GM10248 (cell line): ENCODE measurements at regions of chr2 and their contacts with region 1.

Region 1: GRCh38 chr2:69816923-69817542 is 12.4 kb upstream of the GMCL1 start:
- DNase-seq: peak; percentile 59
- CTCF ChIP-seq: peak; percentile 74

Region 2: DNA sequence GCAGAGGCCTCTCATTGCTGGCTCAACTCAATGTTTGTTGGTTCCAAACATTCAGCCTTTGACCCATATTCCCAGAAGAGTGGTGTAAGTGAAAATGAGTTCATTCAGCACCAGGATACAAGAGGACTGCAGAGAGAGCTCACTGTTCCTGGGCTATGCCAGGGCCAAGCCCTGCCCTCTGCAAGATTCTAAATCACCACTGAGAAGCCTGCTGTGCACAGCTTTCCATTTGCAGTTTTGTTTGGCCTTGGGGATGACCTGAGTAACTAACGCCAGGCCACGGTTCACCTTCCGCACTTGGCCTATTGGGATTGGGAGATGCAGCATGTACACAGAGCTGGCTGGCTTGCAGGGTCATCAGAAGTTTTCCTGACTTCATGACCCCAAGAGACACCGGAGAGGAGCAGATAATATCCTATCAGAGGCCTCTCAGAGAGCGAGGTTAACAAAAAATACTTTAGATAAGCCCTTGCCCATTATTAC is 830.0 kb before region 1 on chr2:
- CTCF ChIA-PET with region 1: no interaction called
- POLR2A ChIA-PET with region 1: no interaction called
- DNase-seq: no peak
- CTCF ChIP-seq: no peak

Region 3: GRCh38 chr2:69634196-69634821 is 182.7 kb before region 1 on chr2:
- CTCF ChIA-PET with region 1: no interaction called
- POLR2A ChIA-PET with region 1: no interaction called
- DNase-seq: no peak
- CTCF ChIP-seq: no peak

Region 4: GRCh38 chr2:69734035-69734631 is 82.9 kb before region 1 on chr2:
- CTCF ChIA-PET with region 1: interaction called, 35 read pairs
- POLR2A ChIA-PET with region 1: no interaction called
- DNase-seq: no peak
- CTCF ChIP-seq: no peak

Region 5: DNA sequence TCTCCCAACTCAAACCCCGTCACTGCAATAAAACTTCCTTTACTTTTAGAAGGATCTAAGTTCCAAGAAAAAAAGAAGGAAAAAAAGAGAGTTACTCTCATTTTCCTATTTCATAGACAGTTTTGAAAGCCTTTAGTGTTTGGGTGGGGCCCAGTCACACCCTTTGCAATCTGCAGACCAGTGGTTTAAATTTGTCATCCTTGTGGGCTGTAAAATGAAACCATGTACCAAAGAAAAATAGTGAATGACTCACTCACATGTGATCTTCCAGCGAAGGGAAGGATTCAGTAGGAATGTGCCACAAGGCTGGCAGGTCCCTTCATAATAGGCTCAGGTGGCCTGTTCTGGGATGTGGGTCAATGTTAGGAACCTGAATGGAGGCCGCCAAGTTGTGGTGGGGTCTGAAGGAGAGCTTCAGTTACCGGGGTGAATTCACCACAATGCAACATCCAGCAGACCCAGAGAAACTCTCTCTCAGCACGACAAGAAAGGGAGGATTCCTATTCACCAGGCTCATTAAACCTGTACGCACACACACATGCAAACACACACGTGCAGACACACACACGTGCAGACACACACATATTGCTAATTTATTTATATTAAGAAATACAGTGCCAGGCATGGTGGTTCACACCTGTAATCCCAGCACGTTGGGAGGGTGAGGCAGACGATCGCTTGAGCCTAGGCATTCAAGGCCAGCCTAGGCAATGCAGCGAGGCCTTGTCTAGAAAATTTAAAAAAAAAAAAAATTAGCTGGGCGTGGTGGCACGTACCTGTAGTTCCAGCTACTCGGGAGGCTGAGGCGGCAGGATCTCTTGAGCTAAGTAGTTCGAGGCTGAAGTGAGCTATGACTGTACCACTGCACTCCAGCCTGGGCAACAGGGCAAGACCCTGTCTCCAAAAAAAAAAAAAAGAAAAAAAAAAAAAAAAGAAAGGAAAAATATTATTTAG is 46.6 kb before region 1 on chr2:
- CTCF ChIA-PET with region 1: interaction called, 55 read pairs
- POLR2A ChIA-PET with region 1: no interaction called
- DNase-seq: no peak
- CTCF ChIP-seq: no peak

Region 6: GRCh38 chr2:69789175-69789721 is 27.8 kb before region 1 on chr2:
- CTCF ChIA-PET with region 1: interaction called, 24 read pairs
- POLR2A ChIA-PET with region 1: no interaction called
- DNase-seq: no peak
- CTCF ChIP-seq: no peak

Region 7: DNA sequence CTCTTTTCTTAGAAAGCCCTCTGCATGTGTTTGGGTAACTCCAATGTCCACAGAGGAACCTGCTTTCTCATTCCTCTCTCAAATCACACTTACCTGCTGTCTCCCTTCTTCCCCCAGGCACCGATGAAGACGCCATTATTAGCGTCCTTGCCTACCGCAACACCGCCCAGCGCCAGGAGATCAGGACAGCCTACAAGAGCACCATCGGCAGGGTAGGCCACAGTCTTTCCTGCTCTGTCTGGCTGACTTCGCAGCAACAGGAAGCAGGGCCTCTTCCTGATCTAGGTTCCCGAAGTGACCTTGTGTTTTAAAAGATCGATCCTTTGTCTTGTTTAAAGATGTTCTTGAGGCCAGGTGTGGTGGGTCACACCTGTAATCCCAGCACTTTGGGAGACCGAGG is 12.6 kb before region 1 on chr2:
- CTCF ChIA-PET with region 1: interaction called, 141 read pairs
- POLR2A ChIA-PET with region 1: no interaction called
- DNase-seq: no peak
- CTCF ChIP-seq: no peak

Region 8: DNA sequence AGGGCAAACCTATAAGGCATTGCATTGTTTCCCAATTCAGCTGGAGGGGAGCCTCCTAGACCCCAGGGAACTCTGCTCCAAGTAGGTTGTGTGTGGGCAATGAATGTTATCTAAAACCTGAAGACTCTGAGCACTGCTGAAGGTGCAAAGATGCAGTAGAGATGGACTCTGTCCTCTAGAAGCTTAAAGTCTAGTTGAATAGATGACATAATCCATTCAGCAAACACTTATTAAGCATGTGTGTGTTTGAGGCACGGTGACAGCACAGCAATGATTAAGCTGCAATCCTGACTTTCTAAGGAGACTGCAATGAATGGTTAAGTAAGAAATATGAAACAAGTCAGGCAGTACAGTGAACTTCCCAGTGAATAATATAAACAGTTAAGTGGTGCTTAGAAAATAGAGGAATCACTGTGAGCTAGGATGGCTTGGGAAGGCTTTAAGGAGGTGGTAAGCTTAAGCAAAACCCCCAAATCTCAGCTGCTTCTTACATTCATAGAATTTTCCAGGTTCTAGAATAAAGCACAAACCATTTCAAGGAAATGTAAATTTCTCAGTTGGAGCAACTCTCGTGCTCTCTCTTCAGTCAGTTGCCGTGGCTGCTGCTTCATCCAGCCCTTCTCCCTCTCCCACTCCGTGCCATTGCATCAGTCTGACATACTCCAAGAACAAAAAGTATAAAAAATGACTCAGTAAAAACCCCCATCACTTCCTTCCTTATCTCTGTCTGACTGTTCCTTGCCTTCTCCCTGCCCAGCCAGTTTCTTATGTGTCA is 117.0 kb after region 1 on chr2:
- CTCF ChIA-PET with region 1: no interaction called
- POLR2A ChIA-PET with region 1: no interaction called
- DNase-seq: no peak
- CTCF ChIP-seq: no peak

Region 9: GRCh38 chr2:70104231-70105111 is 287.4 kb after region 1 on chr2:
- CTCF ChIA-PET with region 1: no interaction called
- POLR2A ChIA-PET with region 1: no interaction called
- DNase-seq: peak; percentile 52
- CTCF ChIP-seq: no peak